ENCODE measurements at regions of chr10 and their contacts with region 1.

Region 1: DNA sequence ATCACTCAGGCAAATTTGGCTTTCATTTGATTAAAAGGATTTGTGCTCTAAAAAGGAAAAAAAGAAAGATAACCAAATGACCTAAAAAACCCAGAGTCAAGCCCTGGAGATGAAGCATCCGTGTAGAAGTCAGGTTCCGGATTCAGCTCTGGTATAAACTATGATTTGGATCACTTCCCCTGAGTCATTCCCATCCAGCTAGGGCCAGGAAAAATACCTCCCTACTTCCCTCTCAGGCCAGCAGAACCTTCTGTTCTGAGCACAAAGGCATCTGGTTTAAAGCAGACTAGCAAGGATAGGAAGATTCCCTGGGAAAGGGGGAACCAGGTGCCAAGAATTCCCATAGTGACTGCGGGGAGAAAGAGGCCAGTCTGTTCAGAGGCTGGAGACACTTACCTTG is 25.7 kb upstream of the NDST2 start:
- DNase-seq: no peak
- ATAC-seq: no peak
- H3K4me3 ChIP-seq: no peak overlapping the region
- H3K27ac ChIP-seq: no peak overlapping the region
- H3K4me1 ChIP-seq: peaks cover 46% of the 10 kb centered on the region
- H3K27me3 ChIP-seq: no peaks in the 10 kb centered on the region
- CTCF ChIP-seq: no peak
- EP300 ChIP-seq: no peak
- POLR2A ChIP-seq: no peak
- RAD21 ChIP-seq: no peak

Region 2: GRCh38 chr10:73743905-73744663 is 93.0 kb before region 1 on chr10 and contains the start of gene SEC24C:
- CTCF ChIA-PET with region 1: no interaction called
- POLR2A ChIA-PET with region 1: interaction called, 15 read pairs
- in situ Hi-C with region 1: no loop called
- intact Hi-C with region 1: no loop called
- DNase-seq: peak; percentile 95
- ATAC-seq: peak; percentile 92
- H3K4me3 ChIP-seq: peak within 1 kb of the TSS; percentile 79 to 99 (median 98)
- H3K27ac ChIP-seq: peak within 1 kb of the TSS; percentile 92
- H3K4me1 ChIP-seq: peaks cover 40% of the 10 kb centered on the region
- H3K27me3 ChIP-seq: no peaks in the 10 kb centered on the region; a peak in 1 of 5 replicates
- CTCF ChIP-seq: no peak
- EP300 ChIP-seq: 0 out of 4 replicates have a peak, but pooled peaks of 1 of the 2 experiments have one; percentile 33
- POLR2A ChIP-seq: peak; percentile 73 to 91
- RAD21 ChIP-seq: no peak; the same call in 1 of the 2 replicates
- total RNA-seq, gene SEC24C: 63.1 and 66.5 TPM in 2 replicates

Region 3: GRCh38 chr10:73810735-73811465 is 26.2 kb before region 1 on chr10:
- CTCF ChIA-PET with region 1: no interaction called
- POLR2A ChIA-PET with region 1: interaction called, 23 read pairs
- in situ Hi-C with region 1: no loop called
- intact Hi-C with region 1: no loop called
- DNase-seq: no peak
- ATAC-seq: peak; percentile 49
- H3K4me3 ChIP-seq: peak overlapping the region; percentile 78 to 94 (median 84)
- H3K27ac ChIP-seq: peak overlapping the region; percentile 72
- H3K4me1 ChIP-seq: peaks cover 21% of the 10 kb centered on the region
- H3K27me3 ChIP-seq: no peaks in the 10 kb centered on the region; a peak in 1 of 5 replicates
- CTCF ChIP-seq: no peak
- EP300 ChIP-seq: no peak
- POLR2A ChIP-seq: no peak
- RAD21 ChIP-seq: no peak

Region 4: GRCh38 chr10:73874267-73875138 is 37.4 kb after region 1 on chr10 and contains the start of gene CAMK2G:
- CTCF ChIA-PET with region 1: no interaction called
- POLR2A ChIA-PET with region 1: interaction called, 23 read pairs
- in situ Hi-C with region 1: no loop called
- intact Hi-C with region 1: no loop called
- DNase-seq: peak; percentile 71
- ATAC-seq: peak; percentile 82
- H3K4me3 ChIP-seq: peak within 1 kb of the TSS; percentile 61 to 80 (median 80)
- H3K27ac ChIP-seq: peak within 1 kb of the TSS; percentile 51
- H3K4me1 ChIP-seq: peaks cover 51% of the 10 kb centered on the region
- H3K27me3 ChIP-seq: no peaks in the 10 kb centered on the region; a peak in 2 of 5 replicates
- CTCF ChIP-seq: no peak
- EP300 ChIP-seq: 0 out of 4 replicates have a peak, but pooled peaks of 1 of the 2 experiments have one; percentile 27
- POLR2A ChIP-seq: peak; percentile 62 to 83
- RAD21 ChIP-seq: peak; percentile 17; the same call in 1 of the 2 replicates
- total RNA-seq, gene CAMK2G: 13.0 and 15.9 TPM in 2 replicates

Region 5: GRCh38 chr10:74249865-74250264 is 412.8 kb after region 1 on chr10:
- CTCF ChIA-PET with region 1: no interaction called
- POLR2A ChIA-PET with region 1: no interaction called
- in situ Hi-C with region 1: no loop called
- intact Hi-C with region 1: loop called (anchors 5 kb)
- DNase-seq: no peak
- ATAC-seq: no peak
- H3K4me3 ChIP-seq: no peak overlapping the region
- H3K27ac ChIP-seq: no peak overlapping the region
- H3K4me1 ChIP-seq: 0 out of 2 replicates have a peak, but pooled peaks cover 5% of the 10 kb centered on the region
- H3K27me3 ChIP-seq: no peaks in the 10 kb centered on the region
- CTCF ChIP-seq: no peak
- EP300 ChIP-seq: no peak
- POLR2A ChIP-seq: no peak
- RAD21 ChIP-seq: no peak

Measured in HepG2 (cell line).